Activated T-helper 2 cell treated with anti-CD3 and anti-CD28 coated beads, Interferon-gamma antibody, Interleukin-2, Interleukin-4, amounts not matched to agents 10 μg/mL and 5 μg/mL and 100 μg/mL, durations not matched to agents 14 hours and 24 hours and 36 hours (primary cell): ENCODE measurements at regions of chr4 and their contacts with region 1.

Region 1: DNA sequence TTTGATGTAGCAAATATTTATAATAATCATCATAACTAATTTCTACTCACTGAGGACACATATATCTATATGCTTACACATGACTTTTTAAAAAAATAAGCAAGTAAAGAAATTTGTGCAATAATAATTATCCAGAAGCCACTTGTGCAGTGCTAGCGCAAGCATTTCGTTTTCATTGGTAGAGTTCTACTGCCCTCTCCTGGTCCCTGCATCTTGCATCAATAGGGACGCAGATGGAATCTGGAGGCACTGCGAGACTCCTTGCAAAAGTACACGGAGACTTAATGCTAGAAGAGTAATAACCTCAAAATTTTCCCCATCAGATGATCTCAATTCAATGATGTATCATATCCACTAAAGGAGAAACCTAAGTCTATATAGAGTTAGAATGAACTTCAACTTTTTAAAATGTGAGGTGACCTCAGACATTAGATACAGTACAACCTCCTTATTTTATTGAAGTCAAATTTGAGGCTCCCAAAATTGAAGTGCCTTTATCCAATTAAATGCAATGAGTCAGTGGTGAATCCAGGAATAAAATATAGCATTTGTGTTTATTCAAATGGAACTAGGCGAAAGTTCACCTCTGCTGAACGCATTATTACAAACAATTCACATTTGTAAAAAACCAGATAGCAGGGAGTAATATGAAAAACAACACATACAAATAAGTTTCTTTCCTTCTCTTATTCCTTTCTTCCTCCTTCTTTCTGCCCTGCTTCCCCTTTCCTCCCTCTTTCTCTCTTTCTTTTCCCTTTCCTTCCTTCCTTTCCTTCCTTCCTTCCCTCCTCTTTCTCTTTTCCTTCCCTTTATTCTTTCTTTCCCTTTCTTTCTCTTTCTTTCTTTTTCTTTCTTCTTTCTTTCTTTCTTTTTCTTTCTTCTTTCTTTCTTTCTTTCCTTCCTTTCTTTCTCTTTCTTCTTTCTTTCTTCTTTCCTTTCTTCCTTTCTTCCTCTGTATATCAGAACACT is 450.0 kb downstream of the ANKRD50 start:
- DNase-seq: peak; percentile 10
- H3K4me3 Mint-ChIP-seq: no peak overlapping the region
- H3K27ac Mint-ChIP-seq: no peak overlapping the region
- H3K4me1 Mint-ChIP-seq: no peaks in the 10 kb centered on the region
- H3K27me3 Mint-ChIP-seq: no peaks in the 10 kb centered on the region

Region 2: DNA sequence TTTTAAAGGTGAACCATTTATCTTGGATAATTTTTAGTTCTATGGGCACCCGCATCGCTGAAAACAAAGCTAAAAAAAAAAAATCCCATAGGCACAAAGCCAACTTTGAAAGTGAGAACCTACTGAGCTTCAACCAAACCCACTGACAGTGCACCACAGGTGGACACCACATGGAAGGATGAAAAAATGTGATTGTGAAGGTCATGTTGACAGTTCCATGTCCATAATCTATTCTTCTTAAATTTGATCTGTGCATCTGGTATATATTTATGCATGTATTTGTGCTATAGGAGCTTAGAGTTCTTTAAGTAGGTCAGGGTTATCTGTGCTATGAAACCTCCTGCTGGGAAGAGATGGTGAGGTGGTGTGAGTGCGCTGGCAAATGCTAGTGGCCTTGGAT is 491.6 kb before region 1 on chr4:
- intact Hi-C with region 1: loop called (anchors 5 kb)
- DNase-seq: no peak
- H3K4me3 Mint-ChIP-seq: no peak overlapping the region
- H3K27ac Mint-ChIP-seq: no peak overlapping the region
- H3K4me1 Mint-ChIP-seq: no peaks in the 10 kb centered on the region
- H3K27me3 Mint-ChIP-seq: peaks cover 6% of the 10 kb centered on the region

Region 3: GRCh38 chr4:124401606-124402005 is 139.1 kb after region 1 on chr4:
- intact Hi-C with region 1: no loop called
- DNase-seq: no peak
- H3K4me3 Mint-ChIP-seq: no peak overlapping the region
- H3K27ac Mint-ChIP-seq: no peak overlapping the region
- H3K4me1 Mint-ChIP-seq: no peaks in the 10 kb centered on the region
- H3K27me3 Mint-ChIP-seq: no peaks in the 10 kb centered on the region

Region 4: DNA sequence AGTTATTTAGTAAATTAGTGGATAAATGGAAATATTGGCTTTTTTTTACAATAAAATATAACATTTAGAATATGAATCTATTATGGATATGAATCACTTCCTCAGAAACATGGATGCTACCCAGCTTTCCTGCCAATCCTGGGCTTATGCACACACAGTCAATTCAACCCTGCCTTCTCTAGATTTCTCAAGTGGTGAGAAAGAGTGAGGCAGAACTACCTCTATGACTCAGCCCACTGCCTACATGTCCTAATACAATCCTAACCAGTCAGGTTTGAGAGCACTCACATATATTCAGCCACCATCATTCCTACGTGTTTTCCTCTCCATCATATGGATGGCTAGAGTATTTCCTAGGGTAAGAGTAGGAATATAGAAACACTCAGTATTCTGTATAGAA is 541.1 kb after region 1 on chr4:
- intact Hi-C with region 1: no loop called
- DNase-seq: no peak
- H3K4me3 Mint-ChIP-seq: no peak overlapping the region
- H3K27ac Mint-ChIP-seq: no peak overlapping the region
- H3K4me1 Mint-ChIP-seq: peaks cover 2% of the 10 kb centered on the region
- H3K27me3 Mint-ChIP-seq: no peaks in the 10 kb centered on the region